Mammary epithelial cell (primary cell): ENCODE measurements at regions of chr16 and their contacts with region 1.

Region 1: GRCh38 chr16:13110124-13110796 is 208.9 kb downstream of the SHISA9 start:
- DNase-seq: peak; percentile 98
- H3K4me3 ChIP-seq: no peak overlapping the region
- H3K27ac ChIP-seq: peak overlapping the region; percentile 86
- H3K4me1 ChIP-seq: peaks cover 49% of the 10 kb centered on the region
- H3K27me3 ChIP-seq: no peaks in the 10 kb centered on the region
- CTCF ChIP-seq: no peak

Region 2: DNA sequence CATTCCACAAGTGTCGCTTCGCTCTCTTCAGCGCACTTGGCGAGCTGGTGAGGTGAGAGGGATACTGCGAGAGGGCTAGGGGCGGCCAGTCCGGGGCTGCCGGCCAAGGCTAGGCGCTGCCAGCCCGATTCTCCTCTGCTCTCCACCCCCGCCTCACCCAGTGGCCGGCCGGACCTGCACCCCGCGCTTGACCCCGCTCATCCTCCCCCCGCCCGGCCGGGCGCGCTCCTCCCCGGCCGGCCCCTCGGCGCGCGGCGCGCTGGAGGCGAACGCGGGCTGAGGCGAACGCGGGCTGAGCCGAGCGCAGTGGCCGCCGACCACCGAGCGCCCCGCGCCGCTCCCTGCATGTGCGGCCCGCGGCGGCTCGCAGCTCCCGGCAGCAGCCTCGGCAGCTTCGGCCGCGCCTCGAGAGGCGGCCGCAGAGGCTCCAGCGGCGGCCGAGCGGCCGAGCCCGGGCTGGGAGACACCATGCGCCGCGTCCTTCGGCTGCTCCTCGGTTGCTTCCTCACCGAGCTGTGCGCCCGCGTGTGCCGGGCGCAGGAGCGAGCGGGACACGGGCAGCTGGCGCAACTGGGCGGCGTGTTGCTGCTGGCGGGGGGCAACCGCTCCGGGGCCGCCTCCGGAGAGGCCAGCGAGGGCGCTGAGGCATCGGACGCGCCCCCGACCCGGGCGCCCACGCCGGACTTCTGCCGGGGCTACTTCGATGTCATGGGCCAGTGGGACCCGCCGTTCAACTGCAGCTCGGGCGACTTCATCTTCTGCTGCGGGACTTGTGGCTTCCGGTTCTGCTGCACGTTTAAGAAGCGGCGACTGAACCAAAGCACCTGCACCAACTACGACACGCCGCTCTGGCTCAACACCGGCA is 208.4 kb before region 1 on chr16 and contains the start of gene SHISA9:
- CTCF ChIA-PET with region 1: no interaction called
- dilution Hi-C with region 1: no loop called
- in situ Hi-C with region 1: no loop called
- intact Hi-C with region 1: loop called (anchors 2 kb)
- DNase-seq: peak; percentile 39
- H3K4me3 ChIP-seq: peak within 1 kb of the TSS; percentile 62 to 83 (median 66)
- H3K27ac ChIP-seq: no peak within 1 kb of the TSS
- H3K4me1 ChIP-seq: peaks cover 31% of the 10 kb centered on the region
- H3K27me3 ChIP-seq: no peaks in the 10 kb centered on the region
- CTCF ChIP-seq: no peak
- total RNA-seq, gene SHISA9: 15.7 to 60.5 TPM

Region 3: DNA sequence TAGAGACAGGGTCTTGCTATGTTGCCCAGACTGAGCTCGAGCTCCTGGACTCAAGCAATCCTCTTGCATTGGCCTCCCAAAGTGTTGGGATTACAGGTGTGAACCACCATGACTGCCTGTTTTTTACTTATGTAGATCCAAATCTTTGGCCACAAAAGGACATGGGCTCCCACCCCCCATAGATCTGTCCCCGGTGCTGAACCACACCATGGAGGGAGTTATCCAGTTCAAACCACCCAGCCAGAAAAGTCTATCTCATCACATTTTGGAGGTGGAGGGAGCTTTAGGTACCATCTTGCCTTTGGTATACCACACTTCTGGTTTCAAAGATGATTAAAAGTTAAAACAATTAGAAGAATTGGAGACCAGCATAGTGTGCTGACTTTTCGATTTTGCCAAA is 182.7 kb before region 1 on chr16:
- CTCF ChIA-PET with region 1: no interaction called
- dilution Hi-C with region 1: no loop called
- in situ Hi-C with region 1: no loop called
- intact Hi-C with region 1: no loop called
- DNase-seq: no peak
- H3K4me3 ChIP-seq: no peak overlapping the region
- H3K27ac ChIP-seq: no peak overlapping the region
- H3K4me1 ChIP-seq: peaks cover 9% of the 10 kb centered on the region
- H3K27me3 ChIP-seq: no peaks in the 10 kb centered on the region
- CTCF ChIP-seq: no peak

Region 4: GRCh38 chr16:13036600-13036999 is 73.7 kb before region 1 on chr16:
- CTCF ChIA-PET with region 1: no interaction called
- dilution Hi-C with region 1: no loop called
- in situ Hi-C with region 1: no loop called
- intact Hi-C with region 1: loop called (anchors 5 kb)
- DNase-seq: peak; percentile 41
- H3K4me3 ChIP-seq: no peak overlapping the region
- H3K27ac ChIP-seq: no peak overlapping the region
- H3K4me1 ChIP-seq: no peaks in the 10 kb centered on the region
- H3K27me3 ChIP-seq: no peaks in the 10 kb centered on the region
- CTCF ChIP-seq: no peak

Region 5: GRCh38 chr16:13168091-13168572 is 57.9 kb after region 1 on chr16:
- CTCF ChIA-PET with region 1: no interaction called
- dilution Hi-C with region 1: no loop called
- in situ Hi-C with region 1: no loop called
- intact Hi-C with region 1: loop called (anchors 5 kb)
- DNase-seq: peak; percentile 88
- H3K4me3 ChIP-seq: peak overlapping the region in 1 of 3 experiments; percentile 10
- H3K27ac ChIP-seq: peak overlapping the region; percentile 22
- H3K4me1 ChIP-seq: peaks cover 15% of the 10 kb centered on the region
- H3K27me3 ChIP-seq: no peaks in the 10 kb centered on the region
- CTCF ChIP-seq: no peak

Region 6: DNA sequence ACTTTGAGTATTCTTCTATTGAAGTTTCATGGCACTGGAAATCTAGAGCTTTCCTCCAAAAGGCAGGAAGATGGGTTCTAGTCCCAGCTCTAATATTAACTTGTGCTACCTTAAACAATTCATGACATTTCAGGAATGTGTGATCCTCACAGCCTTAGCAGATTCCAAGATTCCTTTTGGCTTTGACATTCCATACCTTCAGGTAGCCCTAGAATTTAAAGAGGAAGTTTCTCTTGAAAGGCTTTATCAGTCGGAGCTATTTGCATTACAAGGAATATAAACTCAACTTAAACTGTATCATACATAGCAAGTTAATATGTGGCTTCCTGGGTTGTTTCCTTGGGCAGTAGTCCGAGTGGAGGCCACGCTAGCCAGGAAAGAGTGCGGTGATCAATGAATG is 121.1 kb after region 1 on chr16:
- CTCF ChIA-PET with region 1: no interaction called
- dilution Hi-C with region 1: no loop called
- in situ Hi-C with region 1: no loop called
- intact Hi-C with region 1: loop called (anchors 10 kb)
- DNase-seq: no peak
- H3K4me3 ChIP-seq: no peak overlapping the region
- H3K27ac ChIP-seq: no peak overlapping the region
- H3K4me1 ChIP-seq: peaks cover 17% of the 10 kb centered on the region
- H3K27me3 ChIP-seq: no peaks in the 10 kb centered on the region
- CTCF ChIP-seq: no peak

Region 7: DNA sequence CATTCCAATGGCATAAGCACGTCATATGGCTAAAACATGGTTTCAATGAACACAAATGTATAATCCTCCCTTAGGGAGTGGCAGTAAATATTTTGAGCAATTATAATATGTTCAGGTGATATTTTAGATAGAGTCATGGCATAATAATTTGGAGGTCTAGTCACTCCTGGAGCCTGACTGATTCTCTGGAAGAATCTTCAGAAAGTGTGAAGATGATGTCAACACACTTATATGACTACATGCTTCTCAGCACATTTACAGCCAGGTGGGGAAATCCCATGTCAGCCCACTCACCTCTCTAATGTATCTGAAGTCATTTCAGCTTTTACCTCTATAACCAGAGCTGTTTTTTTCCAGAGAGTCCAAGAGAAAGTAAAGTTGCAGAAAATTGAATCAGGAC is 265.9 kb after region 1 on chr16:
- CTCF ChIA-PET with region 1: no interaction called
- dilution Hi-C with region 1: no loop called
- in situ Hi-C with region 1: no loop called
- intact Hi-C with region 1: loop called (anchors 10 kb)
- DNase-seq: peak; percentile 71
- H3K4me3 ChIP-seq: no peak overlapping the region
- H3K27ac ChIP-seq: no peak overlapping the region
- H3K4me1 ChIP-seq: peaks cover 9% of the 10 kb centered on the region
- H3K27me3 ChIP-seq: no peaks in the 10 kb centered on the region
- CTCF ChIP-seq: no peak